ENCODE measurements at regions of chr2 and their contacts with region 1.

Region 1: DNA sequence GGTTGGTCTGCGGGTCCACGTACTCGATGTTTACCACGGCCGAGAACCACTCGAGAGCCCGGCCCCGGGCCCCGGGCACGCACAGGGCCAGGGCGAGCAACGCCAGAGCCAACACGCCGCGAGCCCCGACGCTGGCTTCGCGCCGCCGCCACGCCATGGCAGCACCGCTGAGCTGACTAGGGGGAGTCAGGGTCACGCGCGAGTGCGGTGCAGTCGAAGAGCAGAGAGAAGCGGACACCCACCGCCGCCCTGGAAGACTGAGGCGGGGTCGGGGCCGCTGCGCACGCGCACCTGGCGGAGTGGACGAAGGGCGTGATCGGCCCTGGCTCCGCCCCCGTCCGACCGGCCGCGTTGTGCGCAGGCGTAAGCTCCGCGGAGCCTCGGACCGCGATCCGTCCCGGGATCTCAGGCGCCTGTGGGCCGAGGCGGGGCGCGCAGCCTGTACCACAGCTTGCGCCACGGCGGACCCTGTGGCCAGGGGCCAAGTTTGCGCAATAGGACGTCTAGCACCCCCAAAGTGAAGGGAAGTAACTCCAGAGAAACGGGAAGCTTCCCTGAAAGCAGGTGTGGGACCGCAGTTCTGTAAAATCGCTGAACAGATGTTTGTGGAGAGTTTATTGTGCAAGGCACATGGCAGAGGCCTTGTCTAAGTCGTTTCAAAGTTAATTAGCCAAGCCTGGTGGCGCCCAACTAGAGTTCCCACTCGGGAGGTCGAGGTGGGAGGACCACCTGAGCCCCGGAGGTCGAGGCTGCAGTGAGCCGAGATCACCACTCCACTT is at the start of gene RNF149:
- DNase-seq: peak; percentile 87 to 94 (median 91)
- H3K4me3 ChIP-seq: peak within 1 kb of the TSS; percentile 85
- H3K4me3 Mint-ChIP-seq: peak within 1 kb of the TSS; percentile 91 to 99 (median 98)
- H3K27ac ChIP-seq: peak within 1 kb of the TSS; percentile 88
- H3K27ac Mint-ChIP-seq: peak within 1 kb of the TSS; percentile 90 to 100 (median 99)
- H3K4me1 ChIP-seq: peaks cover 74% of the 10 kb centered on the region
- H3K4me1 Mint-ChIP-seq: peaks cover 71 to 85% (median 81%) of the 10 kb centered on the region in 3 donors
- H3K27me3 ChIP-seq: no peaks in the 10 kb centered on the region
- H3K27me3 Mint-ChIP-seq: no peaks in the 10 kb centered on the region
- total RNA-seq, gene RNF149: 43.4 TPM

Region 2: DNA sequence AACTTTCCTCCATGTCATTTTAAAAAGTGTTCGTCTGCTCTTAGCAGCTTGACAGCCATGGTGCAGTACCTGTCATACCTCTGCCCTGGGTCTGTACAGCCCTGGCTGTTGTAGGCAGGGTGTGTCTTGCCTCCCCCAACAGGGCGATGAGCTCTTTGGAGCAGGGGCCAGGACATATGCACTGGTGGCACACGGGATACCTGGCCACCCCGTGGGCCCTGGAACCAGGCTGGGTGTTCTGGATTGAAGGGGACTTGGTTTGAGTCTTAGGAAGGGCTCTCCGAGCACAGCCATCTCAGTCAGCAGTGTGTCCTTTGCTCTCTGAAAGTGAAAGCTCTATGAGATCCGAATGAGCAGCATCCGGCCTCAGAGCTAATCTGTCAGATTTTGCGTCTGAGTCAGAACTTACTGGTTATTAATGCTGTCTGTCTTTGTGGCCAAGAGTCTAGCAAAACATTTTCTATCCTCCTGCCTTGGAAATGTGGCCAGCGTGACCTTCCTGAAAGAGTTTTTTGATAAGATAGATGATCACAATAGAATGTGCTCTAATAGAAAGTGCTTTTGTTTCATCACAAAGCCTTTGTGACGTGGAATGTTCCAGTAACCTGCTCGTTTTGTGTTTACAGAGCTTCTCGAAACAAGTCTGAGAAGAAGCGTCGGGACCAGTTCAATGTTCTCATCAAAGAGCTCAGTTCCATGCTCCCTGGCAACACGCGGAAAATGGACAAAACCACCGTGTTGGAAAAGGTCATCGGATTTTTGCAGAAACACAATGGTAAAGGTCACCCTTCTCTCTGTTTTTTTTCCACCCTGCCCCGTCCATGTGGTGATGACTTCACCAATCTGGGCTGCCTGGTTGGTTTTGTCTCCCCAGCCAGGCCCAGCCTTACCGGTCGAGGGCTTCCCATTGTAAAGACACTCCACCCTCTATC is 383.8 kb before region 1 on chr2:
- CTCF ChIA-PET with region 1: no interaction called
- POLR2A ChIA-PET with region 1: no interaction called
- DNase-seq: peak in 2 of 5 donors; percentile 10 to 56
- H3K4me3 ChIP-seq: peak overlapping the region; percentile 2
- H3K4me3 Mint-ChIP-seq: peak overlapping the region; percentile 24 to 86 (median 75)
- H3K27ac ChIP-seq: peak overlapping the region; percentile 34
- H3K27ac Mint-ChIP-seq: peak overlapping the region; percentile 62 to 96 (median 88)
- H3K4me1 ChIP-seq: peaks cover 5% of the 10 kb centered on the region
- H3K4me1 Mint-ChIP-seq: peaks cover 7 to 18% (median 16%) of the 10 kb centered on the region in 3 donors
- H3K27me3 ChIP-seq: no peaks in the 10 kb centered on the region
- H3K27me3 Mint-ChIP-seq: peaks cover 0 to 4% of the 10 kb centered on the region in 2 donors

Region 3: DNA sequence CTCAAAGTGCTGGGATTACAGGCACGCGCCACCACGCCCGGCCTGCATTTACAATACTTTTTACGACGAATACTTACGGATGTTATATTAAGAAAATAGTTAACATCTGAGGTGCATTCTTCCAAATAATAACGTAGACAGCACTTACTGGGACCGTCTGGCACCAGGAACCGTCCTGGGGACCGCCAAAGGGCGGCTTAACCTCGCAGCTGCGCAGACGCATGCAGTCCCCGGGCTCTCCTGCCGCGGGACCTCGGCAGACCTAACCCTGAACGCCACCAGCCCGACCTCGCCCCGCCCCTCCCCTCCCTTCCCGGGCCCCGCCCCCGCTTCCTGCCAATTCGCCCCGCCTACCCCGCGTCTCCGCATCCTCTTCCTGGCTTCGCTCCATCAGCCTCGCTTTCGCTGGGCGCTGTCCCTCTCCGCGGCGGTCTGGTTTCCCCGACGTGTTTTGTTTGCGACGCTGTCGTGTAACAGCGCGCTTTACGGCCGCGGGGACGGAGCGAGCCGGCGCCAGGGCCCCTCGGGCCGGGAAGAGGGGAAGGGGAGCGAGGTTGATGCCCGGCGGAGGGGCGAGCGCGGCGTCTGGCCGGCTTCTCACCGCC is 56.1 kb before region 1 on chr2 and contains the start of gene CNOT11:
- CTCF ChIA-PET with region 1: interaction called, 5 read pairs
- POLR2A ChIA-PET with region 1: interaction called, 17 read pairs
- DNase-seq: peak; percentile 97 to 99 (median 98)
- H3K4me3 ChIP-seq: peak within 1 kb of the TSS; percentile 81
- H3K4me3 Mint-ChIP-seq: peak within 1 kb of the TSS; percentile 91 to 97 (median 95)
- H3K27ac ChIP-seq: peak within 1 kb of the TSS; percentile 98
- H3K27ac Mint-ChIP-seq: peak within 1 kb of the TSS; percentile 92 to 98 (median 95)
- H3K4me1 ChIP-seq: peaks cover 36% of the 10 kb centered on the region
- H3K4me1 Mint-ChIP-seq: peaks cover 39 to 55% (median 47%) of the 10 kb centered on the region in 3 donors
- H3K27me3 ChIP-seq: no peaks in the 10 kb centered on the region
- H3K27me3 Mint-ChIP-seq: peaks cover 0 to 5% of the 10 kb centered on the region in 2 donors
- total RNA-seq, gene CNOT11: 60.9 to 67.4 TPM

Region 4: GRCh38 chr2:101328474-101329007 is 19.9 kb after region 1 on chr2:
- CTCF ChIA-PET with region 1: interaction called, 9 read pairs
- POLR2A ChIA-PET with region 1: interaction called, 32 read pairs
- DNase-seq: peak in 3 of 5 donors; percentile 54 to 73 (median 72)
- H3K4me3 ChIP-seq: peak overlapping the region; percentile 25
- H3K4me3 Mint-ChIP-seq: no peak overlapping the region
- H3K27ac ChIP-seq: peak overlapping the region; percentile 40
- H3K27ac Mint-ChIP-seq: no peak overlapping the region
- H3K4me1 ChIP-seq: peaks cover 66% of the 10 kb centered on the region
- H3K4me1 Mint-ChIP-seq: peaks cover 0 to 7% (median 5%) of the 10 kb centered on the region in 3 donors
- H3K27me3 ChIP-seq: no peaks in the 10 kb centered on the region
- H3K27me3 Mint-ChIP-seq: no peaks in the 10 kb centered on the region

Region 5: GRCh38 chr2:101520246-101520645 is 211.6 kb after region 1 on chr2:
- CTCF ChIA-PET with region 1: no interaction called
- POLR2A ChIA-PET with region 1: interaction called, 10 read pairs
- DNase-seq: no peak
- H3K4me3 ChIP-seq: no peak overlapping the region
- H3K4me3 Mint-ChIP-seq: no peak overlapping the region
- H3K27ac ChIP-seq: no peak overlapping the region
- H3K27ac Mint-ChIP-seq: no peak overlapping the region
- H3K4me1 ChIP-seq: peaks cover 5% of the 10 kb centered on the region
- H3K4me1 Mint-ChIP-seq: peaks cover 8 to 12% (median 10%) of the 10 kb centered on the region in 3 donors
- H3K27me3 ChIP-seq: no peaks in the 10 kb centered on the region
- H3K27me3 Mint-ChIP-seq: peaks cover 5 to 27% of the 10 kb centered on the region in 2 donors

Measured in CD8-positive, alpha-beta memory T cell (primary cell).